ENCODE measurements at regions of chr14 and their contacts with region 1.

Region 1: DNA sequence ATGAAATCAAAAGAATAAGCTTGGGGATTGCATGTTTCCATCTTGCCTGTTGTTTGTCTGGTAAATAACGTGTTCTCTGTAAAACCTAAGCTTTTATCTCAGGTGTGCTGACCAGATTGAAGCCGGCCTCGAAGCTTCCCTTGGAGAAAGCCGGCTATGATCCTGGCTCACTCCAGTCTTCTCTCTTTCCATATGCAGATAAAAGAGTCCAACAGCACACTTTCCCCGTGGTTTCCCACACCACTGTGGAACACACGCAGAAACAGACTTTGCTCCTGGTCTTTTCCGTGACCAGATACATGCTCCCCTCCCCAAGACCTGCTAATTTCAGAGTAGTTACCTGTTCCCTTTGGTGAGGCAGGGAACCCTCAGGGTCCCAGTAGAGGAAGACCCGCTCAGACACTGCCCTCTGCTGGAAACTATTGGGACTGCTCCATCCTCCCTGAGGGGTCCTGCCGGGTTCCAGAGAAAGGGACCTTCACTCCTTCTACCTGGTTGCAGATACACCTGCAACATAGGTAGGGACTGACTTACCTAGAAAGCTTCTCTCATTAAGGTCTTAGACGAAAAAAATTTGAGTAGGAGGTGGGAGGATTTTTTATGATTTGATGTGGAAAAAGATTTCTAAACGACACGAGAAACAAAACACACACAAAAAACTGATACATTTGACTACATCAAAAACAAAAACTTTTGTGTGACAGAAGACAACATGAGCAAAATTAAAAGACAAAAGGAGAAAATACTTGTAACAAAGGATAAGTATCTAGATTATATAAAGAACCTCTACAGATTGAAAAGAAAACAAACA is 415.5 kb upstream of the CCDC196 start:
- DNase-seq: no peak

Region 2: DNA sequence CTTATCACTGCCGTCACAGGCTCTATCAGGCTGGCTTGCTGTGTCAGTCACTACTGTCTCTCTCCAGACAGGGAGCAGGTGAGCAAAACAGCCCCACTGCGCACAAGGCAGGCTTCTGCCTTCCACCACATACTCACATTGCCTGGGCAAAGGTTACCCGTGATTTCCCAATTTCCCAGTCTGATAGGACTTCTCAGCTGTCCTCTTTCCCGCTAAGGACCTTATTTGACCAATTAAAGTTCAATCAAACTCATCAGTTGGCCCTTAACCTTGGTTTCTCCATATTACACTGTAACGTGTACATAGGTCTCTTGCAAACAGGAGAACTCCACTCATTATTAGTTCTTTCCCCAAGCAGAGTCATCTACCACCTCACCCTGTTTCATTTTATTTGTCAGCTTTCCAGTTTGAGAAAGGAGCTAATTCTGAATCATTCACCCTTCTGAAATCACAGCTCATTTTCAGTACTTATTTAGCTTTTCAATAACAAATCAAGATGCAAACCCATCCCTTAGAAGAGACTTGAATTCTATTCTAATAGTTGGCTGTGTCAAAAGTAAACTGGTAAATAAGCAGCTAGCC is 1947.4 kb before region 1 on chr14:
- intact Hi-C with region 1: loop called in 1 of 2 experiments (anchors 5 kb)
- DNase-seq: no peak

Region 3: DNA sequence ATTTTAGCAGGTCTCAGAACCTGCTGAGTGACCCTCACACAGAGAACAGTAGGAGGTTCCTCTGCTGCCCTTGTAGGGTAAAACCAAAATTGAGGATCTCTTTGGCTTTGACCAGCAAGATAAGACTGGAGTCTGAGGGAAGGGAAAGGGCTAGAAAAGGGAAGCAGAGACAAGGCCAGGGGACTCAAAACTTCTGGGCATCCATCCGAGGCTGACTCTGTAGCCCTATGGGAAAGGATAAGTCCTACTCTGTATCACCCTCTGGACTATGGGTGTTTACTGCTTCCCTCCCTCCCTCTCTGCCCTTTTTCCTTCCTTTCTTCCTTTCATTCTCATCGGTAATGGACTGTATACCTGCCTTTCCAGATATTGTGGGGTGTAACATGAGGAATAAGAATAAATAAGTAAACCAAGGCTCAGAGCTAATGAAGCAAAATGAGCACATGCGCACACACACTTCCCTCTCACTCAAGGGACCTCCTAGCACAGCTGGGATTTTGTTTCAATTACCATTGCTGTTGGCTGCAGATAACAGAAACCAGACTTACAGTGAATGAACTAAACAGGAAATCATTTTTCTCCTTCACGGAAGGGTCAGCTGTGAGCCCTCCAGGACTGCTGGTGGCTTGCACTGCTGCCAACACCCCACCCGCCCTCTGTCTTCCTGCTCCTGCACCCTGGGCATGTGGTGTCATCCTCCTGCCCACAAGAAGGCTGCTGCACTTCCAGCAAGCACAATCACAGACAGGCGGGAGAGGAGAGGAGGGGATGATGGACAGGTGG is 11.1 kb after region 1 on chr14:
- intact Hi-C with region 1: no loop called
- DNase-seq: no peak

Region 4: DNA sequence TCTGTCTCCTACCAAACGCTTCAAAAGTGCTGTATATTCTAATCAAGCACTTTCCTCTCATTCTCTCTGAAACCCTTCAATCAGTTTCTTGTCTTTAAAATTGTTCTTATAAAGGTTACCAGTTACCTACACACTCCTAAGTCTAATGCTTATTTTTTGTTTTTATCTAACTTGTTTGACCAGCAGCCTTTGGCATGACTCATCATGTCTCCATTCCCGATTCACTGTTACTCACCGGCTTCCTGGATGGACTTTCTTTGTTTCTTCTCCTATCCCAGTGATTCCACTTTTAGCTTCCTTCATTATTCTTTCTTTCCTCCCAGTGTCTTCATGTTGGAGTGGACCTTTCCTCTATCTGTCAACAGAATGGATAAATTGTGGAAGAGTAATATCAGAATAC is 46.9 kb after region 1 on chr14:
- intact Hi-C with region 1: no loop called
- DNase-seq: no peak

Measured in posterior vena cava (tissue), 2 donors.